ENCODE measurements at regions of chr7 and their contacts with region 1.

Region 1: GRCh38 chr7:36967387-36967786 is 243.1 kb upstream of the AOAH start:
- DNase-seq: peak; percentile 62
- ATAC-seq: peak; percentile 98
- H3K4me3 ChIP-seq: no peak overlapping the region
- H3K27ac ChIP-seq: no peak overlapping the region
- H3K4me1 ChIP-seq: no peaks in the 10 kb centered on the region
- H3K27me3 ChIP-seq: no peaks in the 10 kb centered on the region; the same call in 1 of the 2 replicates
- CTCF ChIP-seq: peak; percentile 81
- POLR2A ChIP-seq: no peak
- RAD21 ChIP-seq: peak; percentile 75

Region 2: DNA sequence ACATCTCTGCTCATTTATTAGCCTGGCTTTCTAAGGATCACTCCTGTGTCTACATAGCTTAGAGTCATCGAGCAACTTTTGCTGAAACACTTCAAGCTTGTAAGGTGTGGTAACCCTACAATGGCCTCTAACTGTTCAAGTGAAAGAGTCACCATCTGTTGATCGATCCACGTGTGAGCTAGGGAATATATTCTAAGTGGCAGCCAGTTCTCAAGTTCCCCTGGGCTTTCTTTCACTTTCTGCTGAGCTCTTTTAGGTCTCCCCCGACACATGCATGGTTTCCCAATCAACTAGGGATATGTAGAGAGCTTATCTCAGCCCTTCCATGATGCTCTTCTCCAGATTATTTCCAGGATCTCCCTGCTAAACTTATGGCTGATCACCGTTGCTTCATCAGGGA is 258.6 kb before region 1 on chr7:
- CTCF ChIA-PET with region 1: no interaction called
- POLR2A ChIA-PET with region 1: no interaction called
- dilution Hi-C with region 1: no loop called
- in situ Hi-C with region 1: no loop called
- intact Hi-C with region 1: no loop called
- DNase-seq: no peak
- ATAC-seq: no peak
- H3K4me3 ChIP-seq: no peak overlapping the region
- H3K27ac ChIP-seq: no peak overlapping the region
- H3K4me1 ChIP-seq: no peaks in the 10 kb centered on the region
- H3K27me3 ChIP-seq: no peaks in the 10 kb centered on the region; the same call in 1 of the 2 replicates
- CTCF ChIP-seq: no peak
- POLR2A ChIP-seq: no peak
- RAD21 ChIP-seq: no peak

Region 3: GRCh38 chr7:36851382-36851781 is 116.0 kb before region 1 on chr7:
- CTCF ChIA-PET with region 1: no interaction called
- POLR2A ChIA-PET with region 1: no interaction called
- dilution Hi-C with region 1: no loop called
- in situ Hi-C with region 1: no loop called
- intact Hi-C with region 1: no loop called
- DNase-seq: no peak
- ATAC-seq: no peak
- H3K4me3 ChIP-seq: no peak overlapping the region
- H3K27ac ChIP-seq: no peak overlapping the region
- H3K4me1 ChIP-seq: no peaks in the 10 kb centered on the region
- H3K27me3 ChIP-seq: no peaks in the 10 kb centered on the region
- CTCF ChIP-seq: no peak
- POLR2A ChIP-seq: no peak
- RAD21 ChIP-seq: no peak

Region 4: DNA sequence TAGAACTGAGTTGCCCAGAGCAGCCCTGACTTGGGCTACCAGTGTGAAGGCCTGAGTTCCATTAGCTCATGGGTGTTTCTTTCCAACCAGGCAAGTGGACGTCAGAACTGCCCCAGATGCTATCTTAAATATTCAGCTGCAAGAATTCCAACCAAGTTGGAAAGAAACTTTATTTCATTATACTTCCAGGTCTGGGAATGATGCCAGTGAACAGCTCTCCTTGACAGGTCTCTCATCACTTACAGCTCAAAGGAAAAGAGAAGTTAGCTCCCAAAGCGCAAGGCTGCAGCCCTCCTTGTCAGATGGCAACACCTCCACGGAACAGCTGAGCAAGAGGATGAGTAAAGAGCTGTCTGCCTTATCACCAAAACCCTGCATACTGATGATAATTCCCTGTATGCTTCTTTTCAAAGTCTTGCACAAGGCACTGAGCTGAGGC is 12.4 kb after region 1 on chr7:
- CTCF ChIA-PET with region 1: interaction called, 20 read pairs
- POLR2A ChIA-PET with region 1: no interaction called
- dilution Hi-C with region 1: no loop called
- in situ Hi-C with region 1: no loop called
- intact Hi-C with region 1: no loop called
- DNase-seq: no peak
- ATAC-seq: no peak
- H3K4me3 ChIP-seq: no peak overlapping the region
- H3K27ac ChIP-seq: no peak overlapping the region
- H3K4me1 ChIP-seq: no peaks in the 10 kb centered on the region
- H3K27me3 ChIP-seq: peaks cover 6% of the 10 kb centered on the region
- CTCF ChIP-seq: no peak
- POLR2A ChIP-seq: no peak
- RAD21 ChIP-seq: no peak

Region 5: DNA sequence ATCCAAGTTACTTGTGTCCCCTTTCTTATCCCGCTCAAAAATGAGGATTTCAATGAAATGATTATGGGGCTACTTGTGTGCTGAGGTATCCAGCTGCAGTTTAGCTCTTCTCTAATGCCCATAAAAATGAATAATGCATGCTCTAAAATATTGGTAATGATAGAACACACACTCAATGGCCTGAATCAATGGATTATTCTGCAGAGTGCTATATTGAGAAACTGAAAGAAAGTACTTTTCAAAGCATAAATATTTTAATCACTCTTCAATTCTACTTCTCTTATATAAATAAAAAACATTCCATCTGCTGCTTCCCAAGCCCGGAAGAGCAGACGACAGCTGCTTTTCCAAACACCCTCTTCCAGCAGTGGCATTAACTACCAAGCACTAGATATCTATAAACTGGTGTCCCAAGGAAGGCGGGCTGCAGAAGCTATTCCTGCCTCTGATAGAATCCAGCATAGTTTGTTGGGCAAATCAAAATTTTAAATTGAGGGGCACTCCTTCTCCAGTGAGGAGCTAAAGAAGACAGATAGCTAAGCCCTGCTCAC is 41.8 kb after region 1 on chr7:
- CTCF ChIA-PET with region 1: interaction called, 12 read pairs
- POLR2A ChIA-PET with region 1: no interaction called
- dilution Hi-C with region 1: no loop called
- in situ Hi-C with region 1: no loop called
- intact Hi-C with region 1: no loop called
- DNase-seq: no peak
- ATAC-seq: 0 out of 2 replicates have a peak, but pooled peaks have one; percentile 51
- H3K4me3 ChIP-seq: no peak overlapping the region
- H3K27ac ChIP-seq: no peak overlapping the region
- H3K4me1 ChIP-seq: no peaks in the 10 kb centered on the region
- H3K27me3 ChIP-seq: peaks cover 10% of the 10 kb centered on the region
- CTCF ChIP-seq: no peak
- POLR2A ChIP-seq: no peak
- RAD21 ChIP-seq: no peak

Region 6: DNA sequence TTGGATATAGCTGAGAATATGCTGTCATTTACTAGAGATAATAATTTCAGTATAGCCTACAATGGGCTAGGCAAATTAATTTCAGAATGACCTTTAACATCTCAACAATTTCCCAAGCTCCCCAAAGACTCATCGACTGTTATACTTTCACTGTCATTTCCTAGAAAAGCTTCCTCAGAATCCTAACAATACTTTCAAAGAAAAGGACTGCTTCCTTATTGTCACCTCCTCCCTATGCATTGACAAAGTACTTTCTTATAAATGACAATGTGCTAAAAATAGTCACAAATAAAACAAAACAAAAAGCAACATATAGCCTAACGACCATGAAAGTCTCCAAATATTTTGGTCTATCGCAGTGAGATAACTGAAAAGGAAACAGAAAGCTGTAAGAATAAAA is 208.7 kb after region 1 on chr7:
- CTCF ChIA-PET with region 1: interaction called, 104 read pairs
- POLR2A ChIA-PET with region 1: no interaction called
- dilution Hi-C with region 1: no loop called
- in situ Hi-C with region 1: no loop called
- intact Hi-C with region 1: no loop called
- DNase-seq: no peak
- ATAC-seq: no peak
- H3K4me3 ChIP-seq: no peak overlapping the region
- H3K27ac ChIP-seq: no peak overlapping the region
- H3K4me1 ChIP-seq: no peaks in the 10 kb centered on the region
- H3K27me3 ChIP-seq: no peaks in the 10 kb centered on the region
- CTCF ChIP-seq: no peak
- POLR2A ChIP-seq: no peak
- RAD21 ChIP-seq: no peak

Region 7: GRCh38 chr7:37201003-37201875 is 233.9 kb after region 1 on chr7:
- CTCF ChIA-PET with region 1: interaction called, 60 read pairs
- POLR2A ChIA-PET with region 1: no interaction called
- dilution Hi-C with region 1: no loop called
- in situ Hi-C with region 1: no loop called
- intact Hi-C with region 1: loop called (anchors 1 kb)
- DNase-seq: peak; percentile 68
- ATAC-seq: peak; percentile 81
- H3K4me3 ChIP-seq: no peak overlapping the region
- H3K27ac ChIP-seq: no peak overlapping the region
- H3K4me1 ChIP-seq: no peaks in the 10 kb centered on the region
- H3K27me3 ChIP-seq: no peaks in the 10 kb centered on the region
- CTCF ChIP-seq: peak; percentile 87
- POLR2A ChIP-seq: no peak
- RAD21 ChIP-seq: peak; percentile 52

Measured in IMR-90 (cell line).